AG04449 (cell line): ENCODE measurements at regions of chr11 and their contacts with region 1.

Region 1: GRCh38 chr11:36564376-36565030 is 3.3 kb upstream of the RAG1 start:
- DNase-seq: no peak
- H3K4me3 ChIP-seq: peak overlapping the region; percentile 41
- CTCF ChIP-seq: peak; percentile 44

Region 2: DNA sequence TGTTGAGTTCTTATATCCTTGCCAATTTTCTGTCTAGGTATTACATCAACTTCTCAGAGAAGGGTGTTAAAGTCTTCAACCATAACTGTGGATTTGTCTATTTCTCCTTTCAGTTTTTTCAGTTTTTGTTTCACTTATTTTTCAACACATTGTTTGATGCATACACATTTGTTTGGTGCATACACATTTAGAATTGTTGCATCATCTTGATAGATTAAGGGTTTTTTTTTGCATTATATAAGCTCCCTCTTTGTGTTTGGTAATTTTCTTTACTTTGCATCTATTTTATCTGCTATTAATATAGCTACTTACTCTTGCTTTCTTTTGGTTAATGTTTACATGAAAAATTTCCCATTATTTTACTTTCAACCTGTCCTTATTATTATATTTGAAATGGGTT is 33.7 kb before region 1 on chr11:
- CTCF ChIA-PET with region 1: no interaction called
- POLR2A ChIA-PET with region 1: no interaction called
- DNase-seq: no peak
- H3K4me3 ChIP-seq: no peak overlapping the region
- CTCF ChIP-seq: no peak

Region 3: GRCh38 chr11:36594316-36594989 is 29.9 kb after region 1 on chr11 and contains the start of gene IFTAP:
- CTCF ChIA-PET with region 1: interaction called, 11 read pairs
- POLR2A ChIA-PET with region 1: no interaction called
- DNase-seq: peak; percentile 65
- H3K4me3 ChIP-seq: peak within 1 kb of the TSS; percentile 78
- CTCF ChIP-seq: no peak

Region 4: GRCh38 chr11:36657610-36658267 is 93.2 kb after region 1 on chr11:
- CTCF ChIA-PET with region 1: interaction called, 17 read pairs
- POLR2A ChIA-PET with region 1: no interaction called
- DNase-seq: no peak
- H3K4me3 ChIP-seq: no peak overlapping the region
- CTCF ChIP-seq: no peak

Region 5: GRCh38 chr11:36702330-36703055 is 138.0 kb after region 1 on chr11:
- CTCF ChIA-PET with region 1: interaction called, 14 read pairs
- POLR2A ChIA-PET with region 1: no interaction called
- DNase-seq: peak; percentile 4
- H3K4me3 ChIP-seq: no peak overlapping the region
- CTCF ChIP-seq: peak; percentile 75

Region 6: DNA sequence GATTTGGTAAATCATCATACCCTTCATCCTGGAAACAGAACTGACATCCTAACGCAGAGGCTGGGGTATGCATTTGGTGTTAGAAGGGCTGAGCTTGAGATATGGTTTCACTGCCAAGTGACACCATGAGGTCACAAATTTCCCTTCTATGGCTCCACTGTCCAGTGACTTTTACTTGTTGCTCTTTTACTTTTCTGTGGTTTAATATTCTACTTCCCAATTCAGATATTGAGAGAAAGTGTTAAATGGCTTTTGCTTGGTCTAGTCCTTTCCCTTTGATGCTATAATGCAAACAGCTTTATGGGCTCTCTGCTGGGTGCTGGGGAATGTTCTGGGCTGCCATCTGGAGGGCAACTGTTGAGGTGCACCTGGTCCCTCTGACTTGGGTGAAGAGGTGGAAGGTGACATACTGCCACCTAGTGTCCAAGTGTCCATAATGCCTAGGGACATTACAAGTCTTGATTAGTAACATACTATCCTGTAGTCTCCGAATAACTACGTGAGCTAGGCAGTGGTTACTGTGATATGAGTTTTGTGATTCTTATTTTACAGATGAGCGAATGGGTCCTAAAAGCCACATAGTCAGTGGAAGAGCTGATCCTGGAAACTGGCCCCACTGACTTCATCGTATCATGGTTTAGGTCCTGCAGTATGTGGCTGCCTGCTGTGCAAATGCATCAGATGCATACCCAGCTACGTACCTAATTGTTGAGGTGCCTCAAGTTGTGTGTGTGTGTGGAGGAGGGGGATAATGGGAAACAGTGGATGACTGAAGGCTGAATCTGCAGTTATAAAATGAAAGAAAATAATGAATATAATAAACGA is 182.6 kb after region 1 on chr11:
- CTCF ChIA-PET with region 1: interaction called, 252 read pairs
- POLR2A ChIA-PET with region 1: interaction called, 4 read pairs
- DNase-seq: peak; percentile 77
- H3K4me3 ChIP-seq: no peak overlapping the region
- CTCF ChIP-seq: peak; percentile 98

Region 7: DNA sequence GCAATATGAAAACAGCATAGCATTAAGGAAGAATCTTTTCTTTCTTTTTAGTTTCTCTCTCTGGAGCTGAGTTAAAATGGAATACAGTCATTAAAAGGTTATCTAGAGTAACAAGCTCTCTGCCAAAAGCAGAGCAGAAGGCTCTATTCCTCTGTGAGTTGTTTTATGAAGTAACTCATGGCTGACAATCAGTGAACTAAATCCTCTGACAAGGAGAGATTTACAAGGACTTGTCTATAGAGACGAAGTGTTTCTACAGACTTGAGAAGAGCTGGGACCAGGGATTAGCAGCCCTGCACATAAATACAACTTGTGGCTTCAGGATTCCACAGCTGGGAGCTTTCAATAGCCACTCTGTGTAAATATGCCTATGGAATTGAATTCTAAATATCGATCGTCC is 226.0 kb after region 1 on chr11:
- CTCF ChIA-PET with region 1: no interaction called
- POLR2A ChIA-PET with region 1: no interaction called
- DNase-seq: no peak
- H3K4me3 ChIP-seq: no peak overlapping the region
- CTCF ChIP-seq: no peak